ENCODE measurements at regions of chr5 and their contacts with region 1.

Region 1: GRCh38 chr5:17189381-17190036 is 27.9 kb upstream of the BASP1 start:
- DNase-seq: peak; percentile 61
- H3K27ac ChIP-seq: no peak overlapping the region
- CTCF ChIP-seq: peak; percentile 93

Region 2: DNA sequence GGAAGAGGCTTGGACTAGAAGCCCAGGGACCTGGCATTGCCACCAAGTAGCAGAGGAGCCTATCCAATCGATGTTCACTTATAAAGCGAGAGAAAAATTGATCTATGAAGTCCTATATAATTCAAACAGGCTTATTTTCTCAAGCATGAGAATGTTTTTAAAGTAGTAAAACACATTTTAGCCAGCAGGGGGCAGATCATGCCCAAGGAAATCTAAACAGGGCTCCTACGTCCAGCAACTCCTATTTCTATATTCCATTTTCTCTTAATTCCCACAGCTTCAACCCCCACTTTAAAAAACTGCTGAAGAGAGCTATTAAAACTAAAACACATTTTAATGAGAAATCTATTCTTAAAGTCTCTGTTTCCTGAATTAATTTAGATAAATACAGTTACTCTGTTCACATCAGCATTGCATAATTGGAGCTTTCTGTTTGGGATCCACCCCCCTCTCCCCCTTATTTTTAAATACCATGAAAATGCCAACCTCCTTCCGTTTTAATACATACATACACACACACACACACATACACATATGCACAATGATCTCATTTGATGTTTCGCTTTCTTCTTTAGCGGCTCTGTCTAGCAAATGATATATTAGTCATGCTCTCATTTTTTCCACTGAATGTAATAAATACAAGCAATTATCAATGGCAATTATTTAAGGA is 398.3 kb before region 1 on chr5:
- CTCF ChIA-PET with region 1: interaction called, 18 read pairs
- POLR2A ChIA-PET with region 1: no interaction called
- DNase-seq: peak; percentile 67
- H3K27ac ChIP-seq: no peak overlapping the region
- CTCF ChIP-seq: peak; percentile 77

Measured in RWPE1 (cell line).